Activated B cell treated with CpG ODN at 0.5 μM for 24 hours (primary cell): ENCODE measurements at regions of chr2 and their contacts with region 1.

Region 1: GRCh38 chr2:197198890-197199289 is 111.7 kb downstream of the ANKRD44 start:
- DNase-seq: peak; percentile 56
- ATAC-seq: peak; percentile 94
- H3K4me3 Mint-ChIP-seq: peak overlapping the region; percentile 88
- H3K27ac Mint-ChIP-seq: peak overlapping the region; percentile 96
- H3K4me1 Mint-ChIP-seq: peaks cover 83% of the 10 kb centered on the region
- H3K27me3 Mint-ChIP-seq: no peaks in the 10 kb centered on the region
- CTCF ChIP-seq: no peak

Region 2: DNA sequence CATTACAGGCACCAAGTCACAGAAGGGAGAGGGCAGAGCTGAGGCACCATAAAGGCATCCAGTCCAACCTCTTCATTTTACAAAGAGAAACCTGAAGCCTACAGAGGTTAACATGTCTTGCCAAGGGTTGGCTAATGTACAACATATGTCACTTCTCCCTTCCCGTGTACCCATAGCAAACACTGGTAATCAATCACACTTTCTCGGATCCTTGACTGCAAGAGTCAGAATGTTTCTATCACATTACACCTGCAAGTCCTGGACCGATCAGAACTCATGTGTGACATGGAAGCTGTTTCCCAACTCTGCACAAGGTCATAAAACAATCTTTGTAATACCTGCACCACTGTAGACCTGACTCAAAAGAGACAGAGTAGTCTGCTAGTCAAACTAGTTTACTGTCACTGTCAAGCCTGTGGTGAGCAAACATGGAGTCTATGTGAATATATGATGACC is 105.7 kb after region 1 on chr2:
- CTCF ChIA-PET with region 1: interaction called, 75 read pairs
- POLR2A ChIA-PET with region 1: interaction called, 134 read pairs
- intact Hi-C with region 1: loop called (anchors 2 kb)
- DNase-seq: no peak
- ATAC-seq: peak; percentile 5
- H3K4me3 Mint-ChIP-seq: peak overlapping the region; percentile 74
- H3K27ac Mint-ChIP-seq: peak overlapping the region; percentile 95
- H3K4me1 Mint-ChIP-seq: peaks cover 93% of the 10 kb centered on the region
- H3K27me3 Mint-ChIP-seq: no peaks in the 10 kb centered on the region
- CTCF ChIP-seq: no peak